PC-3 (cell line): ENCODE measurements at regions of chr3 and their contacts with region 1.

Region 1: GRCh38 chr3:133661454-133662277 is at the start of gene TOPBP1:
- DNase-seq: peak; percentile 72
- ATAC-seq: peak; percentile 83
- H3K4me3 ChIP-seq: peak within 1 kb of the TSS; percentile 95
- H3K27ac ChIP-seq: peak within 1 kb of the TSS; percentile 57
- H3K4me1 ChIP-seq: peaks cover 12% of the 10 kb centered on the region; the same call in 1 of the 2 replicates
- H3K27me3 ChIP-seq: no peaks in the 10 kb centered on the region
- CTCF ChIP-seq: no peak
- total RNA-seq, gene TOPBP1: 29.0 and 42.4 TPM in 2 replicates

Region 2: GRCh38 chr3:133531981-133532380 is 129.7 kb before region 1 on chr3:
- CTCF ChIA-PET with region 1: no interaction called
- POLR2A ChIA-PET with region 1: no interaction called
- intact Hi-C with region 1: no loop called
- DNase-seq: no peak
- ATAC-seq: no peak
- H3K4me3 ChIP-seq: no peak overlapping the region
- H3K27ac ChIP-seq: no peak overlapping the region
- H3K4me1 ChIP-seq: peaks cover 23% of the 10 kb centered on the region
- H3K27me3 ChIP-seq: no peaks in the 10 kb centered on the region
- CTCF ChIP-seq: no peak

Region 3: DNA sequence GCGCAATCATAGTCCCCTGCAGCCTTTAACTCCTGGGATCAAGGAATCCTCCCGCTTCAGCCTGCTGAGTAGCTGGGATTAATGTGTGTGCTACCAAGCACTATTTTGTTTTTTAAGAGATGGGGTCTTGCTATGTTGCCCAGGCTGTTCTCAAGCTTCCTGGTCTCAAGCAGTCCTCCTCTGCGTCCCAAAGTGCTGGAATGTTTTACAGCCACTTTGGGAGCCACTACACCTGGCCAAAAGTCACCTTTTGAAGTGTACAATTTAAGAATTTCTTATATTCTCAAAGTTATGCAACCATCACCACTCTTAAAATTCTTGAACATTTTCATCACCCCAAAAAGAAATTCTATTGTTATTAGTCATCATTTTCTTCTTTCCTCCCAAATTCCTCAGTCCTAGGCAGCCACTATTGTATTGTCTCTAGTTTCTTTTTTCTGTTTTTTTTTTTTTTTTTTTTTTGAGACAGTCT is 70.4 kb before region 1 on chr3:
- CTCF ChIA-PET with region 1: no interaction called
- POLR2A ChIA-PET with region 1: no interaction called
- intact Hi-C with region 1: loop called (anchors 5 kb)
- DNase-seq: peak; percentile 77
- ATAC-seq: peak; percentile 58
- H3K4me3 ChIP-seq: no peak overlapping the region
- H3K27ac ChIP-seq: no peak overlapping the region
- H3K4me1 ChIP-seq: peaks cover 35% of the 10 kb centered on the region
- H3K27me3 ChIP-seq: no peaks in the 10 kb centered on the region
- CTCF ChIP-seq: no peak

Region 4: GRCh38 chr3:133805527-133806475 is 144.1 kb after region 1 on chr3 and contains the start of gene SRPRB:
- CTCF ChIA-PET with region 1: no interaction called
- POLR2A ChIA-PET with region 1: no interaction called
- intact Hi-C with region 1: loop called (anchors 5 kb)
- DNase-seq: peak; percentile 93
- ATAC-seq: peak; percentile 98
- H3K4me3 ChIP-seq: peak within 1 kb of the TSS; percentile 93
- H3K27ac ChIP-seq: peak within 1 kb of the TSS; percentile 47
- H3K4me1 ChIP-seq: peaks cover 10% of the 10 kb centered on the region
- H3K27me3 ChIP-seq: no peaks in the 10 kb centered on the region
- CTCF ChIP-seq: no peak
- total RNA-seq, gene SRPRB: 41.1 and 43.4 TPM in 2 replicates